H1 (cell line): ENCODE measurements at regions of chr16 and their contacts with region 1.

Region 1: GRCh38 chr16:31458844-31459721 is at the start of gene ARMC5:
- DNase-seq: peak; percentile 93 to 95
- H3K4me3 ChIP-seq: peak within 1 kb of the TSS; percentile 70 to 85 (median 76)
- H3K27ac ChIP-seq: peak within 1 kb of the TSS; percentile 99
- H3K4me1 ChIP-seq: peaks cover 0 to 16% (median 6%) of the 10 kb centered on the region in 4 experiments; a peak in 5 of 7 replicates
- H3K27me3 ChIP-seq: no peaks in the 10 kb centered on the region
- CTCF ChIP-seq: peak; percentile 29 to 34 (median 32); a peak in 3 of 4 replicates
- EP300 ChIP-seq: no peak
- POLR2A ChIP-seq: peak; percentile 89 to 96
- RAD21 ChIP-seq: peak in 1 of 2 experiments; percentile 28; a peak in 2 of 4 replicates
- total RNA-seq, gene ARMC5: 8.7 and 8.9 TPM in 2 replicates

Region 2: GRCh38 chr16:31440516-31441184 is 18.4 kb before region 1 on chr16:
- CTCF ChIA-PET with region 1: interaction called, 25 read pairs
- POLR2A ChIA-PET with region 1: interaction called, 5 read pairs
- DNase-seq: no peak
- H3K4me3 ChIP-seq: no peak overlapping the region
- H3K27ac ChIP-seq: no peak overlapping the region
- H3K4me1 ChIP-seq: no peaks in the 10 kb centered on the region; a peak in 1 of 7 replicates
- H3K27me3 ChIP-seq: peaks cover 0 to 2% (median 0%) of the 10 kb centered on the region in 4 experiments; a peak in 1 of 7 replicates
- CTCF ChIP-seq: no peak
- EP300 ChIP-seq: no peak
- POLR2A ChIP-seq: no peak
- RAD21 ChIP-seq: no peak

Region 3: DNA sequence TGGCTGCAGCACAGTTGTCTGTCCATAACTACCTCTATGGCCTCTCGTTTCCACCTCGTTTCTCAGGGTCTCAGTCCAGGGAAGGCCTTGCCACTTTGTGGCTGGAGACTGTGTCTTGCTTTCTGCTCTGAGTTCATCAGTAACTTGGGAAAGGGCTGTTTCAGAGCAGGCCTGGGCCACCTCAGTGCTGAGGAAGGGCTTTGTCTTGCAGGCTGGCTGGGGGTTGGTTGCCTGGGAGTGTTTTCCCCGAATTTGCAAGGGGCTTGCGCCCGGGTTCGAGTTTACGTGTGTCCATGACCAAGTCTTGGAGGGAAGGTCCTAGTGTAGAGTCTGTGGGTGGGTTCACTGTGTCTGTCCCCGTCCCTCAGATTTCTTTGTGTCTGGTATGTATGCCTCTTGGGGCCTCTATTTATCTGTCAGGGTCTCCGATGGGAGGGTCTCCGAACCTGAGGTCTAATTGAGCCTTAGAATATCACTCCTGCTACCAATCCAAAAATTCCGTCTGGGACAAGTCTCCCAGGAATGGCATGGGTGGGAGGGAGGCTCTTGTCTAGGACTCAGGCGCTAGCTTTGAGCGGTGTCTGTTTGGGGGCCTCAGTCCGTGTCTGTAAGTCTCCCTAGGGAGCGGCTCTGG is 12.3 kb after region 1 on chr16:
- CTCF ChIA-PET with region 1: interaction called, 35 read pairs
- POLR2A ChIA-PET with region 1: interaction called, 40 read pairs
- DNase-seq: no peak
- H3K4me3 ChIP-seq: peak overlapping the region; percentile 35 to 78 (median 56)
- H3K27ac ChIP-seq: no peak overlapping the region
- H3K4me1 ChIP-seq: peaks cover 0 to 10% (median 3%) of the 10 kb centered on the region in 4 experiments; a peak in 4 of 7 replicates
- H3K27me3 ChIP-seq: peaks cover 2 to 36% (median 30%) of the 10 kb centered on the region in 4 experiments
- CTCF ChIP-seq: no peak
- EP300 ChIP-seq: no peak
- POLR2A ChIP-seq: no peak
- RAD21 ChIP-seq: no peak

Region 4: GRCh38 chr16:31476303-31477219 is 17.5 kb after region 1 on chr16:
- CTCF ChIA-PET with region 1: interaction called, 35 read pairs
- POLR2A ChIA-PET with region 1: interaction called, 40 read pairs
- DNase-seq: peak in 1 of 2 experiments; percentile 86
- H3K4me3 ChIP-seq: peak overlapping the region; percentile 54 to 79 (median 64)
- H3K27ac ChIP-seq: no peak overlapping the region
- H3K4me1 ChIP-seq: peaks cover 0 to 8% (median 3%) of the 10 kb centered on the region in 4 experiments; a peak in 5 of 7 replicates
- H3K27me3 ChIP-seq: peaks cover 2 to 49% (median 35%) of the 10 kb centered on the region in 4 experiments
- CTCF ChIP-seq: no peak
- EP300 ChIP-seq: no peak
- POLR2A ChIP-seq: peak in 1 of 2 experiments; percentile 77; a peak in 2 of 3 replicates
- RAD21 ChIP-seq: no peak

Region 5: GRCh38 chr16:31487720-31488467 is 28.8 kb after region 1 on chr16:
- CTCF ChIA-PET with region 1: interaction called, 11 read pairs
- POLR2A ChIA-PET with region 1: interaction called, 14 read pairs
- DNase-seq: peak in 1 of 2 experiments; percentile 87
- H3K4me3 ChIP-seq: peak overlapping the region; percentile 44 to 64 (median 54)
- H3K27ac ChIP-seq: no peak overlapping the region
- H3K4me1 ChIP-seq: peaks cover 0 to 8% (median 5%) of the 10 kb centered on the region in 4 experiments; a peak in 5 of 7 replicates
- H3K27me3 ChIP-seq: peaks cover 14 to 54% (median 42%) of the 10 kb centered on the region in 4 experiments
- CTCF ChIP-seq: no peak
- EP300 ChIP-seq: no peak
- POLR2A ChIP-seq: peak in 1 of 2 experiments; percentile 5; a peak in 1 of 3 replicates
- RAD21 ChIP-seq: no peak

Region 6: DNA sequence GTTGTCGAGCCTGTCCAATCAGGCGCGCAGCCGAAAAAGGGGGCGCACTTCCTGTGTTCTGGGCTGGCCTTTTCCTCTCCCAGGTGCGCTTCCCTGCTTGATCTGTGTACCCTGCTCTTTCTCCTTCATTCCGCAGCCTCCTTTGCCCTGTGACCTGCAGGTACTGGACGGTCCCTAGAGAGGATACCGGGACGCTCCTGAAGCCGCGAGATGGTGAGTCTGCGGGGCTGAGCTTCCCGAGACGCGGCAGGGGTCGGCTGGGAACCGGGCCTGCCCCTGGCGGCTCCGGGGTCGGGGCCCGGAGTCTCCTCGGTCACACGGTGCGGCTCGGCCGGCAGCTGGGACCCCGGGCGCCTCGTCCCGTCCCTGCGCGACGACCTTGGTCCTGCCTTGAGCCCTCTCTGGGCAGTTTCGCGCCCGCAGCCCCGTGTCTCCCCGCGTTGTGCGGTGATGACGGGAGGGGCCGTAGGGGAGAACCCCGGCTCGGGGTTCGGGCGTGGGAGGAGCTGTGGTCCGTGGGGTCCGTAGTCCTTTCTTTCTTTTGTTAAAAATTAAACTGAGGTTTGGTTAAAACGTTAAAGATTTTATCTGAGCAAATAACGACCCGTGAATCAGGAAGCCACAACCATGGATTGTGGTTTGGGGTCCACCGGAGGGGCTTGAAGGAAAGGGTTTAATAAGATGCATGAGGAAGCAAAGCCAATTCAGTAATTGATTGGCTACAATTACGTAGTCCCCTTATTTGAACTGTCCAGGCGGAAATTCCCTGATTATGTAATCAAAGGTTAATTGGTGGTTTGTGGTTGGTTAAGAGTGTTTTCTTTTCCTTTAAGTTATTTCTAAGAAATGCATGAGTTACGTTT is 241.7 kb after region 1 on chr16:
- CTCF ChIA-PET with region 1: interaction called, 13 read pairs
- POLR2A ChIA-PET with region 1: interaction called, 3 read pairs
- DNase-seq: peak in 1 of 2 experiments; percentile 93
- H3K4me3 ChIP-seq: peak overlapping the region; percentile 81 to 96 (median 90)
- H3K27ac ChIP-seq: peak overlapping the region; percentile 19; the same call in 1 of the 2 replicates
- H3K4me1 ChIP-seq: 0 out of 7 replicates have a peak, but pooled peaks cover 0 to 4% (median 0%) of the 10 kb centered on the region in 4 experiments
- H3K27me3 ChIP-seq: peaks cover 0 to 3% (median 0%) of the 10 kb centered on the region in 4 experiments; a peak in 1 of 7 replicates
- CTCF ChIP-seq: peak in 1 of 3 experiments; percentile 5; a peak in 1 of 4 replicates
- EP300 ChIP-seq: no peak
- POLR2A ChIP-seq: peak in 1 of 2 experiments; percentile 78; a peak in 2 of 3 replicates
- RAD21 ChIP-seq: no peak

Region 7: DNA sequence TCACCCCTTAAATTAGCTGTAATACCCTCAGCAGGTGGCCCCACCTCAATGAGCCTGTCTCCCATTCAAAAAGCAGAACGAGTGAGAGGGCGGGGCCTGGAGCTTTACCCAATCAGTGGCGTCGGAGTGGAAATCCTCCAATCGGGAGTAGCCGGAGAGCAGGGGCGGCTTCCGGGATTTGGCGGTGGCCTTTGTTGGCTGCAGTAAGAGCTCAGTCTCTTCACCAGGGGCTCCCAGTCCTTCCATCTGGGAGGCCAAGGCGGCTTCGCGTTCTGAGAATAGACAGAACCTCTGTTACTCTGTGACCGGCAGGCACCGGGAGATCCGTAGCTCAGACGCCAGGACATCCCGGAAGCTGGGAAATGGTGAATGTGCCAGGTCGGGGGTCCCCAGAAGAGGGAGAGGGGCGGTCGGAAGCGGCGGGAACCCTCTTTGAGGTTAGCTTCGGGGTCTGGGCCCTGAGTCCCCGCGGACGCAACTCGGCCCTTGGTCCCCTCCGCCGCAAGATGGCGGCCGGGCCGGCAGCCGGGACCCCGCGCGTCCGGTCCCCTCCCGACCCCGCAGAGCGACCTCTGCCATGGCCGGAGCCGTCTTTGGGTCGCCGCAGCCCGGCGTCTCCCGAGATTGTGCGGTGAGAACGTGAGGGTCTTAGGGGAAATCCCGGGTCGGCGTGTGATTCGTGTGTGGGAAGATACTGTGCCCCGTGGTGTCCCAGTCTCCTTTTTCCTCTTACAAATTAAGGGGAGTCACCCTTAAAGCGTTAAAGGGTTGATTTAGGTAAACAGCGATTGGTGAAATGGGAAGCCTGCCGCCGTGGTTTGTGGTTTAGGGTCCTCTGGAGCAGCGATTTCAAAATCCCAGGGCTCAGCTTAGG is 254.2 kb after region 1 on chr16:
- CTCF ChIA-PET with region 1: interaction called, 9 read pairs
- POLR2A ChIA-PET with region 1: interaction called, 29 read pairs
- DNase-seq: peak; percentile 88 to 93
- H3K4me3 ChIP-seq: peak overlapping the region; percentile 77 to 95 (median 92)
- H3K27ac ChIP-seq: peak overlapping the region; percentile 94
- H3K4me1 ChIP-seq: peaks cover 4 to 14% (median 5%) of the 10 kb centered on the region in 4 experiments; a peak in 6 of 7 replicates
- H3K27me3 ChIP-seq: no peaks in the 10 kb centered on the region
- CTCF ChIP-seq: no peak
- EP300 ChIP-seq: no peak
- POLR2A ChIP-seq: peak; percentile 94 to 96
- RAD21 ChIP-seq: no peak